Dorsolateral prefrontal cortex (tissue), 120 donors: ENCODE measurements at regions of chr17 and their contacts with region 1.

Region 1: DNA sequence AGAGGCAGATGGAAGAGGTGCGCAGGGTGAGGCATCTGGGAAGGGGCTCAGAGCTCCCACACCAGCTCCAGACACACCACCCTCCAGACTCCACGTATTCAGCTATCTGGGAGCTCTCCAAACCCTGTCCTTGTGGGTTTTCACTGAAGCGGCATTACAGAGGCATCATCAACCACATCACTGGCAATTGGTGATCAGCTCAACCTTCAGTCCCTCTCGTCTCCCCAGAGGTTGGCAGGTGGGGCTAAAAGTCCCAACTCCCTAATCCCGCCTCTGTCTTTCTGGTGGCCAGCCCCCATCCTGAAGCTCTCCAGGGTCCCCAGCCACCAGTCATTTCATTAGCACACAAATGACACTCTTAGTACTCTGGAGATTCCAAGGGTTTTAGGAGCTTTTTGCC is 123.9 kb downstream of the KCNJ12 start:
- DNase-seq: no peak
- H3K4me3 ChIP-seq: no peak overlapping the region
- H3K27ac ChIP-seq: no peak overlapping the region
- H3K27me3 ChIP-seq: no peaks in the 10 kb centered on the region
- CTCF ChIP-seq: no peak

Region 2: GRCh38 chr17:21358707-21359482 is 141.2 kb before region 1 on chr17:
- intact Hi-C with region 1: no loop called
- DNase-seq: no peak
- H3K4me3 ChIP-seq: no peak overlapping the region
- H3K27ac ChIP-seq: no peak overlapping the region
- H3K27me3 ChIP-seq: no peaks in the 10 kb centered on the region
- CTCF ChIP-seq: no peak

Region 3: DNA sequence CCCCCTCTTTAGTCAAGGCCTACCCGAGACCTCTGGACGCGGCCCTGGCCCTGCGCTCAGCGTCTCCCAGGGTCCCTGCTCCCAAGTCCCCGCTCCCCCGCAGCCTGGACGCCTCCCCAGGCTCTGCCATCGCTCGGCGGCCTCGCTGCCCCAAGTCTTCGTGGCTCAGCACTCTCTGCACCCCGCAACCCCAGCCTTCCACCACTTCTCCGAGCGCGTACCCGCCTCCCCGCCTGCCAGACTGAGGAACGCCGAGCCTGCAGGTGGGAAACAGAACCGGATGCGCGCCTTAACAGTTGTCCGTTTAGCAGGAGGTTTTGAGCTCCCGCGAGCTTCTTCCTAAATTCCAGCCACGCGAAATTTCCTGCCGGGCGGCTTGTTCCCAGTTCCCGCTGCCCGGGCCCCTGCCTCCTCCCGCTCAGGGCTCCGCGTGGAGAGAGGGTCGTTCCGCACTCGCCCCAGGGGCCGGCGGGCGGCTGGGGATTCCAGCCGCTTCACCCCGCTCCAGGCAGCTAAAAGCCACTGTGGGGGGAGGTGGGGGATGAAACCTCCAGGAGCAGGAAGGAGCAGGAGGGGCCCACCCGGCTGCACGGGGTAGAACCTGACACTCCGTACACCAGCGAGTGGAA is 36.2 kb before region 1 on chr17:
- intact Hi-C with region 1: loop called in 1 of 2 experiments (anchors 5 kb)
- DNase-seq: no peak
- H3K4me3 ChIP-seq: peak overlapping the region in 46 of 59 donors; percentile 3 to 58 (median 35)
- H3K27ac ChIP-seq: peak overlapping the region in 1 of 59 donors; percentile 25
- H3K27me3 ChIP-seq: peaks cover 0 to 10% (median 0%) of the 10 kb centered on the region in 45 donors
- CTCF ChIP-seq: no peak

Region 4: DNA sequence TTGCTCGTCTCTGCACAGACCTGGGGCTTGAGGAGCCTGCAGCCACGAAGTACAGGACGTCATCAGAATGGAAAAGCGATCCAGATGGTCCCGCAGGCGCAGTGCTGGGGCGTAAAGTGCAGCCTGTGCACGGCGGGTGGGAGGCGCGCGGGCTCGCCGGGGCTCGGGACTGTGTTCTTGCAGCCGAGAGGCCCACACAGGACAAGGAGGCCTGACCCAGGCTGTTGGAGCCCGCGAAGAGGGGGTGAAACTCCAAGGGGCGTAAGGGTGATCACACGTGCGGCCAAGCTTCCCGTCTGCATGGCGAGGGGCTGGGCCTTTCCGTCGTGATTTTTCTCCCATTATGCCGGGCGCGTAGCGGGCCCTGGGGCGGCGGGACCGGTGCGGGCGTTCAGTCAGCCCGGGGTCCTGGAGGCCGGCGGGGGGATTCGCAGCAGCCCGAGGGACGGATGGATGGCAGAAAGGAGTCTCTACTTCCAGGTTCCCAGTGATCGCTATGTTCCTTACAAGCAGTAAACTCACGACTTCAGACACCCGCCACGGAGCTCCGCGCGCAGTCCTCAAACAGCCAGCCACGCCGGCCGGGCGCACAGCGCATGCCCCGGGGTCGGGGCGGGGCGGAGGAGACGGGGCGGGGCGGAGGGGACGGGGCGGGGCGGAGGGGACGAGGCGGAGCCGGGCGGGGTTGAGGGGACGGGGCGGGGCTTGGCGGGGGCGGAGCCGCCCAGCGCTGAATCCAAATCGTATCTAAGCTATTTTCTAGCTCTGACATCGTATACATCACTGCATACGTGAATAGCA is 51.2 kb after region 1 on chr17:
- intact Hi-C with region 1: no loop called
- DNase-seq: peak; percentile 75 to 92 (median 84)
- H3K4me3 ChIP-seq: peak overlapping the region; percentile 61 to 92 (median 80)
- H3K27ac ChIP-seq: peak overlapping the region in 55 of 59 donors; percentile 19 to 91 (median 78)
- H3K27me3 ChIP-seq: no peaks in the 10 kb centered on the region
- CTCF ChIP-seq: peak in 7 of 56 donors; percentile 3 to 30 (median 12)